Prostate gland (tissue), 2 donors: ENCODE measurements at regions of chr11 and their contacts with region 1.

Region 1: GRCh38 chr11:67082035-67082791 is 25.6 kb downstream of the RHOD start:
- DNase-seq: no peak
- H3K4me3 ChIP-seq: no peak overlapping the region
- H3K27ac ChIP-seq: no peak overlapping the region
- H3K4me1 ChIP-seq: no peaks in the 10 kb centered on the region
- H3K27me3 ChIP-seq: no peaks in the 10 kb centered on the region
- CTCF ChIP-seq: no peak
- POLR2A ChIP-seq: no peak

Region 2: DNA sequence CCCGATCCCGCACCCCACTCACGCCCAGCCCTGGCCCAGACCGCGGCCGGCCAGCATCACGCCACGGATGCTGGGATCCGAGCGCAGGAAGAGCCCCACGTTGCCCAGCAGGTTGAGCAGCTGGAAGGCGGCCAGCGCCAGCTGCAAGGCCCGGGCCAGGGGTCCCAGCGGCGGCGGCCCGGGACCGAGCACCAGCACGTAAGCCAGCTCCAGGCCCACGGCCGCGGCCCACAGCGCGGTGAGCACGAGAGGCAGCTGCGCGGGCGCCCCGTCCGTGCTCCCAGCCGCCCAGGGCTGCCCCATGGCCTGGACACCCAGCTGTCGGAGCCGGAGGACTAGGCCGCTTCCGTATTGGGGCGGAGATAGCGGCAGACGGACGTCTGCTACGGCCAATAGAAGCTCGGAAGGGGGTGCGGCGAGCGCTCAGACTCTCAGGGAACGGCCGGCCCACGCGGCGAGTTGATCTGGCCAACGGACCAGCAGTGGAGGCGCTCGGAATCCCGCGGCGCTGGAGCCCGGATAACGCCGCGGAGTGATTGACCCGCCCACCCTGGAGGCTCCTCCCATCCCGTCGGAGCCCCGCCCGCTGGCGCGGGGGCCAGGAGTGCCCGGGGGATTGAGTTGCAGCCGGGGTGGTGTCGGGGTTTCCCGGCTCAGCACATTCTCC is 536.4 kb before region 1 on chr11 and contains the start of gene ZDHHC24:
- intact Hi-C with region 1: no loop called
- DNase-seq: peak; percentile 95
- H3K4me3 ChIP-seq: peak within 1 kb of the TSS; percentile 71 to 81
- H3K27ac ChIP-seq: peak within 1 kb of the TSS in 1 of 2 donors; percentile 55
- H3K4me1 ChIP-seq: peaks cover 4% of the 10 kb centered on the region
- H3K27me3 ChIP-seq: no peaks in the 10 kb centered on the region
- CTCF ChIP-seq: no peak
- POLR2A ChIP-seq: peak; percentile 25
- total RNA-seq, gene ZDHHC24: 24.9 to 37.8 TPM

Region 3: DNA sequence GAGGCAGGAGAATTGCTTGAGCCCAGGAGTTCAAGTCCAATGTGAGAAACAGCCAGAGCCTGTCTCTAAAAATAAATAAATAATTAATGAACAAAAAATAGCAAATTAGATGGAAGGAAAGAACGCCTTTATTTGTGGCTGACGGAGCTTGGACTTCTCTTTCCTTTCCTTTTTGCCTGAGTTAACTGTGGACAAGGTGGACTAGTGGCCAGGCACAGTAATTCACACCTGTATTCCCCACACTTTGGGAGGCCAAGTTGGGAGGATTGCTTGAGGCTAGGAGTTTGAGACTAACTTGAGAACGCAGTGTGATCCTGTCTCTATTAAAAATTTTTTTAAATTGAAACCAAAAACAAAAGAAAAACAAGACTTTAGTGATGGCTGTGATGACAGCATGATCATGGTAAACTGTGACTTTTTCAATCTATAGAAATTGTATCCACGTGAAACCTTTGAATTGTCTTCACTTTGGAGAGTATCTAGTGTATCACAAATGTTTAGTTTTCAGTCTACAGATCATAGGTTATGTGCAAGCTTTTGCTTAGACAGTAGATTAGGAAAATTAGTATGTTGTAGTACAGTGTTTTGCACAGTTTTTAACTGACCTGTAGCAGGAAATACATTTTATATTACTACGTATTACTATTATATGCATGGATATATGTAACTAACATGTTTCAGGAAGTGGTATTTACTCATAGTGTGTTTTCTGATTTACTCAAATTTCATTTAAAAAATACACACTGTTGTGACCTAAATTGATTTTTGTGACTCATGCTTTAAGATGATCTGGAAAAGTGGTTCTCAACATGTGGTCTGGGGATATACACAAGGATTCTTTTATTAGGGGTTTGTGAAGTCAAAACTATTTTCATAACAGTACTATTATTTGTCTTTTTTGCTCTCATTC is 78.9 kb after region 1 on chr11:
- intact Hi-C with region 1: loop called (anchors 10 kb)
- DNase-seq: no peak
- H3K4me3 ChIP-seq: no peak overlapping the region
- H3K27ac ChIP-seq: no peak overlapping the region
- H3K4me1 ChIP-seq: no peaks in the 10 kb centered on the region
- H3K27me3 ChIP-seq: no peaks in the 10 kb centered on the region
- CTCF ChIP-seq: no peak
- POLR2A ChIP-seq: no peak

Region 4: GRCh38 chr11:67239783-67240575 is 157.8 kb after region 1 on chr11:
- intact Hi-C with region 1: loop called (anchors 5 kb)
- DNase-seq: peak; percentile 99
- H3K4me3 ChIP-seq: peak overlapping the region; percentile 49 to 51
- H3K27ac ChIP-seq: peak overlapping the region; percentile 85 to 86
- H3K4me1 ChIP-seq: peaks cover 21% of the 10 kb centered on the region
- H3K27me3 ChIP-seq: no peaks in the 10 kb centered on the region
- CTCF ChIP-seq: peak in 2 of 4 experiments; percentile 44 to 52
- POLR2A ChIP-seq: peak; percentile 98

Region 5: GRCh38 chr11:67317205-67317887 is 235.1 kb after region 1 on chr11:
- intact Hi-C with region 1: loop called (anchors 2 kb)
- DNase-seq: peak; percentile 96
- H3K4me3 ChIP-seq: peak overlapping the region; percentile 65 to 89
- H3K27ac ChIP-seq: peak overlapping the region; percentile 94 to 97
- H3K4me1 ChIP-seq: peaks cover 3% of the 10 kb centered on the region
- H3K27me3 ChIP-seq: no peaks in the 10 kb centered on the region
- CTCF ChIP-seq: peak; percentile 86 to 100 (median 98)
- POLR2A ChIP-seq: peak; percentile 83

Region 6: DNA sequence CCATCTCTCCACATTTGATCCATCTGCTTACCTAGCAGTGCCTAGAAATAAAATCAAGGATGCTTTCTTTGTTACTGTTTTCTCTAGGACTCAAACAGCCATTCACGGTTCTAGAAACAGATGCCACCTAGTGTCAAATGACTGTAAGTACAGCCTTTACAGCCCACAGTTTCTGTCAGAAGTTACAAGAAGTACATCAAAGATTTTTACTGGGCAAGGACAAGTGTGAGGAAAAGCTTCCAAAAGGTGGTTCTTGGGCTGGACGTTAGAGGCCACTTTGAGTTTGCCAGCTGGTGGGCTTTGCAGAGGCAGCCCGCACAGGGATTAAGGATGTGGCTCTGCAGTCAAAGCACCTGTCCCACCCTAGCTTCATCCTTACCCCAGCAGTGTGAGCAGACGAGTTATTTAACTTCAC is 1124.0 kb after region 1 on chr11:
- intact Hi-C with region 1: no loop called
- DNase-seq: peak; percentile 46
- H3K4me3 ChIP-seq: no peak overlapping the region
- H3K27ac ChIP-seq: peak overlapping the region in 1 of 2 donors; percentile 44
- H3K4me1 ChIP-seq: peaks cover 13% of the 10 kb centered on the region
- H3K27me3 ChIP-seq: no peaks in the 10 kb centered on the region
- CTCF ChIP-seq: peak; percentile 64 to 88 (median 84)
- POLR2A ChIP-seq: no peak